ENCODE measurements at regions of chr14 and their contacts with region 1.

Region 1: GRCh38 chr14:23076785-23077408 is 18.0 kb downstream of the ACIN1 start:
- DNase-seq: peak in 3 of 9 experiments; percentile 43 to 66 (median 56)
- ATAC-seq: peak; percentile 89
- H3K4me3 ChIP-seq: no peak overlapping the region
- H3K4me3 Mint-ChIP-seq: no peak overlapping the region
- H3K27ac ChIP-seq: no peak overlapping the region
- H3K27ac Mint-ChIP-seq: no peak overlapping the region
- H3K4me1 ChIP-seq: peaks cover 2% of the 10 kb centered on the region
- H3K4me1 Mint-ChIP-seq: peaks cover 19% of the 10 kb centered on the region
- H3K27me3 ChIP-seq: no peaks in the 10 kb centered on the region
- H3K27me3 Mint-ChIP-seq: no peaks in the 10 kb centered on the region
- CTCF ChIP-seq: peak; percentile 85

Region 2: DNA sequence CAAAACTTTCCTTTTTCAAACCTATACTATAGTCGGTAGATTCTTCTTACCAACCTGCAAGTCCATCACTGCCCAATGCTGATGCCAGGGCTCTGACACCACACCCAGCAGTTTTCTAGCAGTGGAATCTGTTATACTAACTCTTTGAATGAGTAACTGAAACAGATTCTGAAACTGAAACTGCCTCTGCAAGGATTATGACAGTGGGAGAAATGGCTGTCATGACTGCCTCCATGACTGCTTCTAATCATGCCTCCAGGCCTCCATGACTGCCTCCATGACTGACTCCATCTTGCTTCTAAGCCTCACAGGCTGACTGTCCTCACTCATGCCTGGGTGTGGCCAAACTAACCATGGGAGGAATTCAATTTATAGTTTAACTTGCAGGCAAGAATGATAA is 339.8 kb before region 1 on chr14:
- CTCF ChIA-PET with region 1: no interaction called
- POLR2A ChIA-PET with region 1: no interaction called
- intact Hi-C with region 1: no loop called
- DNase-seq: no peak
- ATAC-seq: no peak
- H3K4me3 ChIP-seq: no peak overlapping the region
- H3K4me3 Mint-ChIP-seq: no peak overlapping the region
- H3K27ac ChIP-seq: no peak overlapping the region
- H3K27ac Mint-ChIP-seq: no peak overlapping the region
- H3K4me1 ChIP-seq: no peaks in the 10 kb centered on the region
- H3K4me1 Mint-ChIP-seq: peaks cover 2% of the 10 kb centered on the region
- H3K27me3 ChIP-seq: no peaks in the 10 kb centered on the region
- H3K27me3 Mint-ChIP-seq: peaks cover 5% of the 10 kb centered on the region
- CTCF ChIP-seq: no peak

Region 3: DNA sequence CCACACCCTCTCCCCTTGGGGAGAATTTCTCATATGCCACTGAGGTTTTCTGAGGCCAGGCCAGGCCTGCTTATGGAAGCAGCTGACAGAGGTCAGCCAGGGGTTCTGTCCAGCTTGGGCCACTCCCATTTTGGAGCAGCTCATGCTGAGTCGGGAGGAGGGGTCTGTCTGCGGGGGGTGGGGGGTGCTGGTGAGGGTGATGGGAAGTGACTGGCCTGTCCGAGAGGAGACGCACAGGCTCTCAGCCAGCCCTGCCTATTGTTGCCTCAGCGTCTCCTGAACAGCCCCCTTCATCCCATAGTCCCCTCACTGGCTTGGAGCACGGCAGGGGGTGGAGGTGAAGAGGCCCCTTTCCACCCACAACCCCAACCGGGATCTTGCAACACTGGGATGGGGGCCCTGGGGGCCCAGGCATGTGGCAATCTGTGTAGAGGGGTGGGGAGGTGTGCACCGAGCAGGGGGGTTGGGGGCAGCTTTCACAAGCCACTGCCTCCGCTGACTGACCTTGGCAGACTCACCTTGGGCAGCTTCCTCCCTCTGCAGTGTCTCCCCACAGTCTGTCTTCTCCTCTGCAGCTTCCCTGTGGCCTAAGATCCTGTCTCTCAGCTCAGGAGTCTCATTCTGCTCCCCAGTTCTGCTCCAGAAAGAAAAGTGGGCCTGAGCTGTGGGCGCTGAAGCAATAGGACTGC is 36.7 kb after region 1 on chr14:
- CTCF ChIA-PET with region 1: interaction called, 8 read pairs
- POLR2A ChIA-PET with region 1: no interaction called
- intact Hi-C with region 1: loop called (anchors 1 to 2 kb)
- DNase-seq: no peak
- ATAC-seq: no peak
- H3K4me3 ChIP-seq: no peak overlapping the region
- H3K4me3 Mint-ChIP-seq: no peak overlapping the region
- H3K27ac ChIP-seq: no peak overlapping the region
- H3K27ac Mint-ChIP-seq: no peak overlapping the region
- H3K4me1 ChIP-seq: peaks cover 25% of the 10 kb centered on the region
- H3K4me1 Mint-ChIP-seq: peaks cover 32% of the 10 kb centered on the region
- H3K27me3 ChIP-seq: peaks cover 0 to 7% of the 10 kb centered on the region in 2 experiments
- H3K27me3 Mint-ChIP-seq: peaks cover 2% of the 10 kb centered on the region
- CTCF ChIP-seq: no peak

Measured in CD8-positive, alpha-beta T cell (primary cell).